ENCODE measurements at regions of chrX and their contacts with region 1.

Region 1: GRCh38 chrX:44244008-44244407 is 99.5 kb downstream of the EFHC2 start:
- DNase-seq: peak; percentile 46
- ATAC-seq: no peak
- H3K4me3 ChIP-seq: no peak overlapping the region
- H3K4me3 Mint-ChIP-seq: no peak overlapping the region
- H3K27ac ChIP-seq: no peak overlapping the region
- H3K27ac Mint-ChIP-seq: no peak overlapping the region
- H3K4me1 ChIP-seq: no peaks in the 10 kb centered on the region
- H3K4me1 Mint-ChIP-seq: peaks cover 7% of the 10 kb centered on the region
- H3K27me3 ChIP-seq: no peaks in the 10 kb centered on the region
- H3K27me3 Mint-ChIP-seq: peaks cover 2% of the 10 kb centered on the region
- CTCF ChIP-seq: peak; percentile 56

Region 2: GRCh38 chrX:43836435-43837184 is 407.4 kb before region 1 on chrX:
- CTCF ChIA-PET with region 1: interaction called, 16 read pairs
- POLR2A ChIA-PET with region 1: no interaction called
- intact Hi-C with region 1: no loop called
- DNase-seq: peak; percentile 16
- ATAC-seq: no peak
- H3K4me3 ChIP-seq: no peak overlapping the region
- H3K4me3 Mint-ChIP-seq: no peak overlapping the region
- H3K27ac ChIP-seq: no peak overlapping the region
- H3K27ac Mint-ChIP-seq: no peak overlapping the region
- H3K4me1 ChIP-seq: no peaks in the 10 kb centered on the region
- H3K4me1 Mint-ChIP-seq: no peaks in the 10 kb centered on the region
- H3K27me3 ChIP-seq: no peaks in the 10 kb centered on the region
- H3K27me3 Mint-ChIP-seq: peaks cover 3% of the 10 kb centered on the region
- CTCF ChIP-seq: peak; percentile 72

Region 3: DNA sequence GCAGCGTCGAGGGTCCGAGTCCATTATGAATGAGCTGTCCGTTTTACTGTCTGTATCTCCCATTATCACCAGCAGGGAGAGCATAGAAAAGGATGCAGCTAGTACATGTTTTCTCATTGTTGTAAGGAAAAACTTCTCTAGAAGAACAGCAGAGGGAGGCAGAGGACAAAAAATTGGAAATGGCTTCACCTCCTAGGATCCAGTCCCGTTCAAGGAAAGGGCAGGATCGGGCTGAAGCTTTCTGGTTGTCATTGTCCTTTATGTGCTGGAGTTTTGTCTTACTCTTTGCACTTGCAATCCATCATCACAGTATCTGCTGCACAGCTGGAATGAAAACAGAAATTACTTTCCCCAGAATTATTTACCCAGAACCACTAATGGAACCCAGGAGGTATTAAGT is 285.5 kb before region 1 on chrX:
- CTCF ChIA-PET with region 1: interaction called, 15 read pairs
- POLR2A ChIA-PET with region 1: no interaction called
- intact Hi-C with region 1: loop called (anchors 2 kb)
- DNase-seq: peak; percentile 58
- ATAC-seq: peak; percentile 41
- H3K4me3 ChIP-seq: no peak overlapping the region
- H3K4me3 Mint-ChIP-seq: no peak overlapping the region
- H3K27ac ChIP-seq: no peak overlapping the region
- H3K27ac Mint-ChIP-seq: no peak overlapping the region
- H3K4me1 ChIP-seq: no peaks in the 10 kb centered on the region
- H3K4me1 Mint-ChIP-seq: no peaks in the 10 kb centered on the region
- H3K27me3 ChIP-seq: no peaks in the 10 kb centered on the region
- H3K27me3 Mint-ChIP-seq: peaks cover 18% of the 10 kb centered on the region
- CTCF ChIP-seq: peak; percentile 64

Region 4: DNA sequence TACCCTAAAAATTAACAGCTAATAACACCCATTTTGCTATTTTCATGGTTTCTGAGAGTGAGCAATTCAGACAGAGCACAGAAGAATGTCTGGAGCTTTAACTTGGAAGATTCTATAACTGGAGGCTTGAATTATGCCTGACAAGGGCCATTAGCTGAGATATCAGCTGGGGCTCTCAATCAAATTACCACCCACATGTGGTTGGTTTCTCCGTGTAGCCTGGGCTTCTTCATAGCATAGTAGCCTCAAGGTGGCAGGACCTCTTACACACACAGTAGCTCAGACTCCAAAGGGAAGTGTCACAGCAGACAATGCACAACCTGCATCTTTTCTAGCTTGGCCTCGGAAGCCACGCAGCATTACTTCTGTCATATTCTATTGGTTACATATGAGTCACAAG is 27.8 kb before region 1 on chrX:
- CTCF ChIA-PET with region 1: no interaction called
- POLR2A ChIA-PET with region 1: no interaction called
- intact Hi-C with region 1: no loop called
- DNase-seq: no peak
- ATAC-seq: no peak
- H3K4me3 ChIP-seq: no peak overlapping the region
- H3K4me3 Mint-ChIP-seq: no peak overlapping the region
- H3K27ac ChIP-seq: no peak overlapping the region
- H3K27ac Mint-ChIP-seq: no peak overlapping the region
- H3K4me1 ChIP-seq: no peaks in the 10 kb centered on the region
- H3K4me1 Mint-ChIP-seq: no peaks in the 10 kb centered on the region
- H3K27me3 ChIP-seq: no peaks in the 10 kb centered on the region
- H3K27me3 Mint-ChIP-seq: no peaks in the 10 kb centered on the region
- CTCF ChIP-seq: no peak

Measured in B cell (primary cell).